GM12878 (cell line): ENCODE measurements at regions of chr19 and their contacts with region 1.

Region 1: GRCh38 chr19:42440357-42441048 is 2.2 kb downstream of the CXCL17 start:
- DNase-seq: no peak
- ATAC-seq: peak; percentile 92
- H3K4me3 ChIP-seq: no peak overlapping the region
- H3K27ac ChIP-seq: no peak overlapping the region
- H3K4me1 ChIP-seq: no peaks in the 10 kb centered on the region
- H3K27me3 ChIP-seq: no peaks in the 10 kb centered on the region
- CTCF ChIP-seq: peak; percentile 79 to 95 (median 95)
- EP300 ChIP-seq: no peak
- POLR2A ChIP-seq: no peak
- RAD21 ChIP-seq: 0 out of 2 replicates have a peak, but pooled peaks have one; percentile 24

Region 2: DNA sequence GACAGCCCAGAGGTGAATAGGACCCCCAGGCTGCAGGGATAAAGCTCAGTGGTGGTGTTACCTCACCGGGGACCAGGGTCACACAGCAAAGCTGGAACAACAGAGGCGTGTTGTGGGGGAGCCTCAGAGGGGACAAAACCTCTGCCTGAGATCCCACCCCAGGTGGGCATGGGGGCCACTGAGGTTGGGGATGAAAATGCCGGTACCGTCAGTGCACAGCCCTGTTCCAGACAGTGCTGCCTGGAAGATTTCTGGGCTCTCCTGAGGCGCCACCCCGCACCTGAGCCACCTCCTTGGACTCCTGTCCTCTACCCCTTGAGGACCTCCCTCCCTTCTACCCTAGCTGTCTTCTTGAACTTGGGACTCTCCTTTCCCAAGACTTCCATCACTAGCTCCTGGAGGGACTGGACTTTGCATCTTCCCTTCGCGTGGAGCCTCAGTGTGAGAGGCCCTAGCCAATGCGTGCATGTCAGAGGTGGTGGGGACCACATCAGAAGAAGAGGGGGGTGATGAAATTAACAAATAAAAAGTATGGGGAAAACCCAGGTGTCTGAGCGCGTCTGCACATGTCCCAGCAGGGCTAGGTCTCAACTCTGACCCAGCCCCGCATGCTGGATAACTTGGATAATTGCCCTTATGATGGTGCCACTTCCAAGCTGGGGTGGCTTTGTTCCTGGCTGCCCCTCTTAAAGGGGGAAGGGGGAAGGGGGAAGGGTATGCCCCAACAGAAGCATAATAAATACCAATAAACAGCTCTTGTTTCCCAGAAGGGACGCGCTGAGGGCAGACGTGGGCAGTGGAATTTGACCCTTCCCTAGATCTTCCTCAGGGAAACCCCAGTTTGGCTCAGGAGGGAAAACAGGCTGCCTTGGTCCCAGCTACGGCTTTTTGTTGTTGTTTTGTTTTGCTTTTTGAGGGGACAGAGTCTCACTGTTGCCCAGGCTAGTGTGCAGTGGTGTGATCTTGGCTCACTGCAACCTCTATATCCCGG is 62.0 kb before region 1 on chr19:
- CTCF ChIA-PET with region 1: interaction called, 12 read pairs
- POLR2A ChIA-PET with region 1: no interaction called
- RAD21 ChIA-PET with region 1: interaction called, 3 read pairs
- SMC1A ChIA-PET with region 1: no interaction called
- in situ Hi-C with region 1: no loop called
- intact Hi-C with region 1: no loop called
- DNase-seq: no peak
- ATAC-seq: peak; percentile 28; the same call in 1 of the 3 replicates
- H3K4me3 ChIP-seq: no peak overlapping the region
- H3K27ac ChIP-seq: no peak overlapping the region
- H3K4me1 ChIP-seq: 0 out of 2 replicates have a peak, but pooled peaks cover 3% of the 10 kb centered on the region
- H3K27me3 ChIP-seq: no peaks in the 10 kb centered on the region; a peak in 2 of 4 replicates
- CTCF ChIP-seq: no peak
- EP300 ChIP-seq: no peak
- POLR2A ChIP-seq: no peak
- RAD21 ChIP-seq: no peak

Region 3: GRCh38 chr19:42423462-42424344 is 16.8 kb before region 1 on chr19:
- CTCF ChIA-PET with region 1: interaction called, 95 read pairs
- POLR2A ChIA-PET with region 1: interaction called, 3 read pairs
- RAD21 ChIA-PET with region 1: interaction called, 4 read pairs
- SMC1A ChIA-PET with region 1: interaction called, 7 read pairs
- in situ Hi-C with region 1: no loop called
- intact Hi-C with region 1: no loop called
- DNase-seq: no peak
- ATAC-seq: peak; percentile 96
- H3K4me3 ChIP-seq: peak overlapping the region; percentile 94
- H3K27ac ChIP-seq: peak overlapping the region; percentile 86
- H3K4me1 ChIP-seq: peaks cover 16% of the 10 kb centered on the region
- H3K27me3 ChIP-seq: no peaks in the 10 kb centered on the region
- CTCF ChIP-seq: no peak
- EP300 ChIP-seq: no peak
- POLR2A ChIP-seq: peak; percentile 69
- RAD21 ChIP-seq: no peak

Region 4: GRCh38 chr19:42461700-42462324 is 21.3 kb after region 1 on chr19:
- CTCF ChIA-PET with region 1: interaction called, 14 read pairs
- POLR2A ChIA-PET with region 1: interaction called, 4 read pairs
- RAD21 ChIA-PET with region 1: interaction called, 7 read pairs
- SMC1A ChIA-PET with region 1: interaction called, 4 read pairs
- in situ Hi-C with region 1: no loop called
- intact Hi-C with region 1: no loop called
- DNase-seq: no peak
- ATAC-seq: no peak
- H3K4me3 ChIP-seq: no peak overlapping the region
- H3K27ac ChIP-seq: no peak overlapping the region
- H3K4me1 ChIP-seq: peaks cover 22% of the 10 kb centered on the region
- H3K27me3 ChIP-seq: no peaks in the 10 kb centered on the region
- CTCF ChIP-seq: no peak
- EP300 ChIP-seq: no peak
- POLR2A ChIP-seq: no peak
- RAD21 ChIP-seq: no peak

Region 5: GRCh38 chr19:42474743-42475142 is 34.2 kb after region 1 on chr19:
- CTCF ChIA-PET with region 1: interaction called, 12 read pairs
- POLR2A ChIA-PET with region 1: no interaction called
- RAD21 ChIA-PET with region 1: no interaction called
- SMC1A ChIA-PET with region 1: no interaction called
- in situ Hi-C with region 1: no loop called
- intact Hi-C with region 1: no loop called
- DNase-seq: no peak
- ATAC-seq: no peak
- H3K4me3 ChIP-seq: no peak overlapping the region
- H3K27ac ChIP-seq: no peak overlapping the region
- H3K4me1 ChIP-seq: peaks cover 3% of the 10 kb centered on the region; the same call in 1 of the 2 replicates
- H3K27me3 ChIP-seq: no peaks in the 10 kb centered on the region
- CTCF ChIP-seq: no peak
- EP300 ChIP-seq: no peak
- POLR2A ChIP-seq: no peak
- RAD21 ChIP-seq: no peak

Region 6: GRCh38 chr19:42529248-42529764 is 88.8 kb after region 1 on chr19:
- CTCF ChIA-PET with region 1: interaction called, 82 read pairs
- POLR2A ChIA-PET with region 1: interaction called, 3 read pairs
- RAD21 ChIA-PET with region 1: interaction called, 23 read pairs
- SMC1A ChIA-PET with region 1: interaction called, 23 read pairs
- in situ Hi-C with region 1: no loop called
- intact Hi-C with region 1: no loop called
- DNase-seq: no peak
- ATAC-seq: peak; percentile 94
- H3K4me3 ChIP-seq: peak overlapping the region; percentile 20; the same call in 1 of the 2 replicates
- H3K27ac ChIP-seq: peak overlapping the region; percentile 74
- H3K4me1 ChIP-seq: peaks cover 15% of the 10 kb centered on the region
- H3K27me3 ChIP-seq: no peaks in the 10 kb centered on the region
- CTCF ChIP-seq: peak; percentile 97 to 98 (median 97); a peak in 5 of 6 replicates
- EP300 ChIP-seq: no peak
- POLR2A ChIP-seq: 0 out of 2 replicates have a peak, but pooled peaks have one; percentile 25
- RAD21 ChIP-seq: peak; percentile 98

Region 7: DNA sequence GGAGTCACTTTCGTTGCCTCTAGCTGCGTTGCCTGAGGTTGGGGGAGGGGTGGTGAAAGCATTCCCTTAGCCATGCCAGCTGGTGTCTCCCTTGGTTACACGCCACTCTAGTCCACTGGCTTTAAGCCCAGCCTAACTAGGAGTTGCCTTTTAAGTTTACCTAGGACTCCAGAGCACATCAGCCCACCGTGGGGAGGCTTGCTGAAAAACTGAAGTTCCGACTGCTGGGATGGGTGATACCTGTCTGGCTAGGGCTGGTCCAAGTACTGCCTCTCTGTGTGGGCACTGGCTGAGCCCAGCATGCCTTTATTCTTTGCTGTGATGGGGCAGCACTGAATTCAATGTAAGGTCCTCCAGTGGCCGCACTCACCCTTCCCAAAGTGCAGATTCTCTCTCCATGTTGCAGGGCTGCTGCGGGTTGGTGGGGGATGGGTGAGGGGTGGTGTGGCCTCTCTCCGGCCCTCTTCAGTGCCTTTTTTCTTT is 99.6 kb after region 1 on chr19:
- CTCF ChIA-PET with region 1: interaction called, 20 read pairs
- POLR2A ChIA-PET with region 1: interaction called, 3 read pairs
- RAD21 ChIA-PET with region 1: interaction called, 4 read pairs
- SMC1A ChIA-PET with region 1: no interaction called
- in situ Hi-C with region 1: no loop called
- intact Hi-C with region 1: no loop called
- DNase-seq: no peak
- ATAC-seq: no peak
- H3K4me3 ChIP-seq: no peak overlapping the region
- H3K27ac ChIP-seq: no peak overlapping the region
- H3K4me1 ChIP-seq: no peaks in the 10 kb centered on the region
- H3K27me3 ChIP-seq: no peaks in the 10 kb centered on the region
- CTCF ChIP-seq: no peak
- EP300 ChIP-seq: no peak
- POLR2A ChIP-seq: no peak
- RAD21 ChIP-seq: no peak